ENCODE measurements at regions of chr16 and their contacts with region 1.

Region 1: DNA sequence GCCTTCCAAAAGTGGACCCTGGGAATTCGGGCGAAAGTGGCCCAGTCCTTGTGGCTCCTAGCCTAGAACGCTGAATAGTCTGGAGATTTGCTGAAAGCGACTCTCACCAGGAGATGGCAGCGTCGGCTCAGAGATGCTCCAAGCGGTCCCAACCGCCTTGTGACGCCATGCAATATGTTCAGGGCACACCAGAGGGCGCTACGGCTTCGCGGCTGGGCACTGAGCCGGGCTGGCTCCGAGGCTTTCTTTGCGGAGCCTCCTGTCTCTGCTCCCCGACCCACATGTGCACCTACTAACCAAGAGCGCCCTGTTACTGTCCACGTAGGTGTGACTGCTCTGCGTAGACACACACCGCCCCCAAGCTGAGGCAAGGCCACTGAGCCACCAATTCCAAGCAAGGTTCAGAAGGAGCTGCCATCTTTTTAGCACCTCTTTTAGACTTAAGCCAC is 36.9 kb downstream of the SYCE1L start:
- DNase-seq: peak; percentile 59
- H3K4me3 ChIP-seq: no peak overlapping the region
- H3K27ac ChIP-seq: no peak overlapping the region
- H3K4me1 ChIP-seq: no peaks in the 10 kb centered on the region
- H3K27me3 ChIP-seq: no peaks in the 10 kb centered on the region
- CTCF ChIP-seq: peak; percentile 99 to 100

Region 2: GRCh38 chr16:77406677-77407076 is 170.6 kb after region 1 on chr16:
- CTCF ChIA-PET with region 1: no interaction called
- dilution Hi-C with region 1: no loop called
- in situ Hi-C with region 1: no loop called
- intact Hi-C with region 1: loop called (anchors 10 kb)
- DNase-seq: peak; percentile 8
- H3K4me3 ChIP-seq: no peak overlapping the region
- H3K27ac ChIP-seq: no peak overlapping the region
- H3K4me1 ChIP-seq: no peaks in the 10 kb centered on the region
- H3K27me3 ChIP-seq: peaks cover 2% of the 10 kb centered on the region
- CTCF ChIP-seq: peak; percentile 26 to 35

Region 3: GRCh38 chr16:77584205-77584859 is 348.2 kb after region 1 on chr16:
- CTCF ChIA-PET with region 1: no interaction called
- dilution Hi-C with region 1: no loop called
- in situ Hi-C with region 1: loop called (anchors 5 kb)
- intact Hi-C with region 1: loop called (anchors 1 kb)
- DNase-seq: peak; percentile 47
- H3K4me3 ChIP-seq: no peak overlapping the region
- H3K27ac ChIP-seq: no peak overlapping the region
- H3K4me1 ChIP-seq: peaks cover 11% of the 10 kb centered on the region
- H3K27me3 ChIP-seq: peaks cover 3% of the 10 kb centered on the region
- CTCF ChIP-seq: peak; percentile 82 to 85

Region 4: DNA sequence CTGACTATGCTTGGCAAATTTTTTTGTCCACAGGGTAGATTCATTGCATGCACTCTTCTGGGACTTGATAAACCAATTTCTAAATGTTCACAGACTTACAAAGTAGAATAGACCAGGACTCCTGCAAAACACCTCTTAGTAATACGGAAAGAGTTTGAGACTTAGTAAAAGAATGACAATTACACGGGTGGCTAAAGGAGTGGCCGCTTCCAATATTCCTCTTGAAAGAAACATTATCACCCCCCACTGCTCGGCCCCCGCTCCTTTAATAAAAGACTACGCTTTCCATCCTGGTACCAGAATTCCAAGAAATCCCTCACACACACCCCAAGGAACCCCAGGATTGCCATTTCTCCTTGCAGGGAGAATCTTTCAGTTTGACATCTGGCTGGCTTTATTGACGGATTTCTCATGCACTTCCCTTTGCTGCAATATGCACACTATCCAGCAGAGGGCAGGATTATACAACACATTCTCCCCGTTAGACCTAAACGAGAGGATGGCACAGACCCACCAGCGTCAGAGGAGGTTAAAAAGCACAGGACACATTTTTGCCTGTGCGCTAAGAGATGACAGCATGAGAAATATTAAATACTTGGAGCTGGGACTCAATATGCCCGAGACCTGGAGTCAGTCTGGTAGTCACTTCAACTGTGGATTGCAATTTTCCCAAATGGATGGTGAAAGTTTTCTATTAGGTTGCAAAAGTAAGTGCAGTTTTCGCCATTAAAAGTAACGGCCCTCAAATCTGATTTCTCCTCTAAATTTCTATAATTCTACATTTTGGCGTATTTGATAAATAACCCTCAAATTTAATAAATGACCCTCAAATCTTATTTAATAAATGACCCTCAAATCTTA is 439.6 kb after region 1 on chr16:
- CTCF ChIA-PET with region 1: no interaction called
- dilution Hi-C with region 1: loop called (anchors 10 kb)
- in situ Hi-C with region 1: no loop called
- intact Hi-C with region 1: loop called (anchors 1 kb)
- DNase-seq: peak; percentile 58
- H3K4me3 ChIP-seq: no peak overlapping the region
- H3K27ac ChIP-seq: no peak overlapping the region
- H3K4me1 ChIP-seq: no peaks in the 10 kb centered on the region
- H3K27me3 ChIP-seq: no peaks in the 10 kb centered on the region
- CTCF ChIP-seq: peak; percentile 88 to 91

Region 5: GRCh38 chr16:77993111-77993985 is 757.3 kb after region 1 on chr16:
- CTCF ChIA-PET with region 1: no interaction called
- dilution Hi-C with region 1: no loop called
- in situ Hi-C with region 1: loop called in 1 of 2 experiments (anchors 25 kb)
- intact Hi-C with region 1: no loop called
- DNase-seq: no peak
- H3K4me3 ChIP-seq: no peak overlapping the region
- H3K27ac ChIP-seq: no peak overlapping the region
- H3K4me1 ChIP-seq: no peaks in the 10 kb centered on the region
- H3K27me3 ChIP-seq: no peaks in the 10 kb centered on the region
- CTCF ChIP-seq: no peak

Region 6: GRCh38 chr16:78099372-78100161 is 863.5 kb after region 1 on chr16 and contains the start of gene WWOX:
- CTCF ChIA-PET with region 1: no interaction called
- dilution Hi-C with region 1: no loop called
- in situ Hi-C with region 1: no loop called
- intact Hi-C with region 1: loop called (anchors 1 kb)
- DNase-seq: peak; percentile 99
- H3K4me3 ChIP-seq: peak within 1 kb of the TSS; percentile 72 to 97 (median 89)
- H3K27ac ChIP-seq: peak within 1 kb of the TSS; percentile 78
- H3K4me1 ChIP-seq: peaks cover 14% of the 10 kb centered on the region
- H3K27me3 ChIP-seq: no peaks in the 10 kb centered on the region
- CTCF ChIP-seq: peak; percentile 57 to 95
- total RNA-seq, gene WWOX: 11.0 TPM

Measured in mammary epithelial cell (primary cell).